Activated CD4-positive, alpha-beta T cell treated with anti-CD3 and anti-CD28 coated beads for 36 hours (primary cell): ENCODE measurements at regions of chr14 and their contacts with region 1.

Region 1: GRCh38 chr14:22641846-22642245 is 2.3 kb downstream of the OR6J1 start:
- DNase-seq: no peak
- ATAC-seq: no peak
- H3K4me3 Mint-ChIP-seq: no peak overlapping the region
- H3K27ac Mint-ChIP-seq: no peak overlapping the region
- H3K4me1 Mint-ChIP-seq: peaks cover 8% of the 10 kb centered on the region
- H3K27me3 Mint-ChIP-seq: no peaks in the 10 kb centered on the region

Region 2: DNA sequence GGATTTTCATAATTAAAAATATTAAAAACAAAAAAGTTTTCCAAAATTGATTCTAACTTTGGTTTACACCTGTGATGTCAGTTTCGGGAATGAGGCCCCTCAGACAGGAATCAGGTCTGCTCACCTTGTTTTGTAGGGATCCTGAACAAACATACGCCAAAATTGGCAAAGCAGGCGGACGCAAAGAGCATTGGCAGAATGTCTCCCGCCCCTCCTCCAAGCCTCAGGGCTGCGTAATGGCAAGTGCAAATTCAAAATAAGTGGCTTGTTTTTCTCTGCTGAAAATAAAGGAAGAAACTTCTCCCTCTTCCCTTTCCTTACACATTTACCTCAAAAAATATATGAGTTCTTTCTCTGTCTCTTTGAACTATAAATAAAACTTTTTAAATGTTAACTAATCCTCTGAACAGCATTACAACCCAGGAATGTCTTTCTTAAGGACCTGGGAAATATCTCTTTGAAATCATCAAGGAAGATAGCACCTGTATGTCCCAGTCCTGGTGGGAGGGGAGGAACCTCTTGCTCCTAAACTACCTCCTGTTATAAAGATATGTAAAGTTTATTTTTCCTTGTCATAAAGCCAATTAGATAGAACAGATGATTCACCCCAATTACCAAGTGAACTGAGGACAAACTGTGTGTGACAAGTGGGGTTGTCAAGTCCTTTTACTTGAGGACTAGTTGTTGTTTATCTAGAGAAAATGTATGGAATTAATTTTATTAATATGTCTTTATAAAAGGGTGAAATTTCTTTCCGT is 14.2 kb before region 1 on chr14:
- CTCF ChIA-PET with region 1: interaction called, 4 read pairs
- POLR2A ChIA-PET with region 1: no interaction called
- intact Hi-C with region 1: loop called in 1 of 2 experiments (anchors 2 kb)
- DNase-seq: no peak
- ATAC-seq: no peak
- H3K4me3 Mint-ChIP-seq: no peak overlapping the region
- H3K27ac Mint-ChIP-seq: no peak overlapping the region
- H3K4me1 Mint-ChIP-seq: no peaks in the 10 kb centered on the region
- H3K27me3 Mint-ChIP-seq: peaks cover 5% of the 10 kb centered on the region

Region 3: GRCh38 chr14:22653012-22653621 is 11.3 kb after region 1 on chr14:
- CTCF ChIA-PET with region 1: interaction called, 5 read pairs
- POLR2A ChIA-PET with region 1: interaction called, 10 read pairs
- intact Hi-C with region 1: no loop called
- DNase-seq: peak; percentile 75
- ATAC-seq: peak; percentile 80
- H3K4me3 Mint-ChIP-seq: no peak overlapping the region
- H3K27ac Mint-ChIP-seq: no peak overlapping the region
- H3K4me1 Mint-ChIP-seq: no peaks in the 10 kb centered on the region
- H3K27me3 Mint-ChIP-seq: no peaks in the 10 kb centered on the region

Region 4: DNA sequence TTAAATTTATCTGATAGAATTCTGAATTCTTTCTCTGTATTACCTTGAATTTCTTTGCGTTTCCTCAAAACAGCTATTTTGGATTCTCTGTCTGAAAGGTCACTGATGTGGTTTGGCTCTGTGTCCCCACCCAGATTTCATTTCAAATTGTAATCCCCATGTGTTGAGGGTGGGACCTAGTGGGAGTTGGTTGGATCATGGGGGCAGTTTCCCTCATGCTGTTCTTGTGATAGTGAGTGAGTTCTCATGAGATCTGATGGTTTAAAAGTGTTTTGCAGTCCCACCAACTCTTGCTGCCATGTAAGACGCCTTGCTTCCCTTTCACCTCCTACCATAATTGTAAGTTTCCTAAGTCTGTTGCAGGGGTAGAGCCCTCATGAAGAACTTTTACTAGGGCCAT is 36.4 kb after region 1 on chr14:
- CTCF ChIA-PET with region 1: no interaction called
- POLR2A ChIA-PET with region 1: no interaction called
- intact Hi-C with region 1: no loop called
- DNase-seq: no peak
- ATAC-seq: no peak
- H3K4me3 Mint-ChIP-seq: no peak overlapping the region
- H3K27ac Mint-ChIP-seq: no peak overlapping the region
- H3K4me1 Mint-ChIP-seq: no peaks in the 10 kb centered on the region
- H3K27me3 Mint-ChIP-seq: peaks cover 26% of the 10 kb centered on the region

Region 5: GRCh38 chr14:22689186-22689585 is 47.3 kb after region 1 on chr14:
- CTCF ChIA-PET with region 1: no interaction called
- POLR2A ChIA-PET with region 1: no interaction called
- intact Hi-C with region 1: no loop called
- DNase-seq: peak; percentile 49
- ATAC-seq: peak; percentile 100
- H3K4me3 Mint-ChIP-seq: no peak overlapping the region
- H3K27ac Mint-ChIP-seq: peak overlapping the region; percentile 7
- H3K4me1 Mint-ChIP-seq: peaks cover 8% of the 10 kb centered on the region
- H3K27me3 Mint-ChIP-seq: peaks cover 42% of the 10 kb centered on the region